ENCODE measurements at regions of chr22 and their contacts with region 1.

Region 1: DNA sequence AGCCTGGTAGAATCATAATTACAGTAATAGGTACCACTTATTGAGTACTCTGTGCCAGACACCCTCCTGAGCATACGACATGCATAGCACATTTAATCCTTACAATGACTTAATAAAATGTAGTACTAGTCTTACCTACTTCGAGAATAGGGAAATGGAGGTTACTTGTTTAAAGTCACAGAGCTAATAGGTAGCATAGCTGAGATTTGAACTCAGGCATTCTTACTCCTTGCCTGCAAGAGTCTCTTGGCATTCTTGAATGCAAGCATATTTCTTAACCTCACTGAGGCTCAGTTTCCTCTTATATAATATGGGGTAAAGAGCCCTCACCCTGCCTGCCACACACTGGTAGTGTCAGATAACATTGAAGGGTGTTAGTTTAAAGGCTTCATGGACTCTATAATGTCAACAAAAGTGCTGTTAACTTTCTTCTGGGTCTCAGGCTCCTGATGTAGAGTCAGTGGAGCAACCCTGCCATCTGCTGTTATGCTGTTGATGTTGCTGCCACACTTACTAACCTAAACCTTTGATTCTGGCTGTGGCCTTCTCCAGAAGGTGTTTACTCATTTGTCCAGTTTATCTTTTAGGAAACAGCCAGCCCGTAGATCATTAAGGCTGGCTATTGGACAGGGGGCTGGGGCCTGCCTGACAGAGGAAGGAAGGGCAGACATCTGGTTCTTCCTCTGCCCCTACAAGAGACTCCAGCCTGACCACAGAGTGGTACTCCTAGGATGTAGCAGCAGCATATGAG is 18.9 kb downstream of the LIMK2 start:
- DNase-seq: peak in 2 of 5 donors; percentile 46
- ATAC-seq: peak; percentile 73 to 77 (median 76)
- H3K4me3 ChIP-seq: no peak overlapping the region
- H3K27ac ChIP-seq: peak overlapping the region in 11 of 12 donors; percentile 61 to 95 (median 70)
- H3K4me1 ChIP-seq: peaks cover 5 to 80% (median 35%) of the 10 kb centered on the region in 12 donors
- H3K27me3 ChIP-seq: no peaks in the 10 kb centered on the region
- CTCF ChIP-seq: peak; percentile 53 to 82 (median 68)
- POLR2A ChIP-seq: no peak

Region 2: DNA sequence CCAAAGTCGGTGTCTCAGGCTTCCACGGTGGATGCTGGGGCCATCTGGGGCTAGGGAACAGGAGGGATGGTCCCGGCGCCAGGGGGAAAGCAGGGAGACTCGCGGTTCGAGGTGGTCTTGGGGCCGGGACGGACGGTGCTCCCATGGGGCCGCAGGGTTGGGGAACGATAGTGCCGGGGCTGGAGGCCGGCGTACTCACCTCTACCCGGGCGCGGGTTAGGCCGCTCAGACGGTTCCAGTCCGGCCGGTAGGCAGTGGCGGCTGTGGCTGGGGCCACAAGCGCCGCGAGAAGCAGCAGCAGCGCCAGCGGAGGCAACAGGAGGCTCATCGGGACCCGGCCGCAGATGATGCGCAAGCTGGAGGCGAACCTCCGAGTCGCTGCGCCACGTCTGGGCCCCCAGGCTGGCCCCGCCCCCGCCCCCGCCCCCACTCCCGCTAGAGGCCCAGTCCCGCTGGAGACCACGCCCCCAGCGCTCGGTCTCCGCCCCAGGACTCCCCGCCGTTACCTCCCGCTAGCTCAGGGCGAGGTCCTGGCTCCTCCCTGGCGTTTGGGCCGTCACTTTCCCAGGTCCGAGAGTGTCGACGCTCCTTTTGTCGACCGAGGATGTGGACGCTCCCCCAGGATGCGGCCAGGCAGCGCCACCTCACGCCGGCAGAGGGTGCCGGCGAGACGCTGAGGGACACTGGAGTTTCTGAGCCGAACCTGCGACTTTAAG is 123.7 kb before region 1 on chr22 and contains the start of gene SELENOM:
- intact Hi-C with region 1: loop called in 9 of 10 experiments (anchors 2 to 10 kb)
- DNase-seq: peak; percentile 97 to 98 (median 97)
- ATAC-seq: peak; percentile 92 to 95 (median 94)
- H3K4me3 ChIP-seq: peak within 1 kb of the TSS; percentile 56 to 95 (median 74)
- H3K27ac ChIP-seq: peak within 1 kb of the TSS; percentile 88 to 99 (median 93)
- H3K4me1 ChIP-seq: peaks cover 0 to 45% (median 20%) of the 10 kb centered on the region in 12 donors
- H3K27me3 ChIP-seq: no peaks in the 10 kb centered on the region
- CTCF ChIP-seq: peak; percentile 88 to 99 (median 96)
- POLR2A ChIP-seq: peak in 1 of 2 donors; percentile 83
- total RNA-seq, gene SELENOM: 35.0 to 183 (median 52.9) TPM

Region 3: GRCh38 chr22:31119026-31119717 is 111.9 kb before region 1 on chr22:
- intact Hi-C with region 1: loop called in 2 of 10 experiments (anchors 10 kb)
- DNase-seq: peak in 4 of 5 donors; percentile 66 to 82 (median 74)
- ATAC-seq: peak; percentile 83 to 91 (median 90)
- H3K4me3 ChIP-seq: no peak overlapping the region
- H3K27ac ChIP-seq: peak overlapping the region; percentile 58 to 94 (median 88)
- H3K4me1 ChIP-seq: peaks cover 0 to 51% (median 21%) of the 10 kb centered on the region in 12 donors
- H3K27me3 ChIP-seq: no peaks in the 10 kb centered on the region
- CTCF ChIP-seq: no peak
- POLR2A ChIP-seq: peak in 1 of 2 donors; percentile 66

Region 4: GRCh38 chr22:31160328-31160978 is 70.6 kb before region 1 on chr22:
- intact Hi-C with region 1: loop called in 1 of 10 experiments (anchors 5 kb)
- DNase-seq: peak in 1 of 5 donors; percentile 33
- ATAC-seq: peak; percentile 29 to 63 (median 54)
- H3K4me3 ChIP-seq: peak overlapping the region; percentile 75 to 95 (median 88)
- H3K27ac ChIP-seq: peak overlapping the region; percentile 75 to 96 (median 90)
- H3K4me1 ChIP-seq: peaks cover 0 to 39% (median 29%) of the 10 kb centered on the region in 12 donors
- H3K27me3 ChIP-seq: no peaks in the 10 kb centered on the region
- CTCF ChIP-seq: no peak
- POLR2A ChIP-seq: no peak

Region 5: DNA sequence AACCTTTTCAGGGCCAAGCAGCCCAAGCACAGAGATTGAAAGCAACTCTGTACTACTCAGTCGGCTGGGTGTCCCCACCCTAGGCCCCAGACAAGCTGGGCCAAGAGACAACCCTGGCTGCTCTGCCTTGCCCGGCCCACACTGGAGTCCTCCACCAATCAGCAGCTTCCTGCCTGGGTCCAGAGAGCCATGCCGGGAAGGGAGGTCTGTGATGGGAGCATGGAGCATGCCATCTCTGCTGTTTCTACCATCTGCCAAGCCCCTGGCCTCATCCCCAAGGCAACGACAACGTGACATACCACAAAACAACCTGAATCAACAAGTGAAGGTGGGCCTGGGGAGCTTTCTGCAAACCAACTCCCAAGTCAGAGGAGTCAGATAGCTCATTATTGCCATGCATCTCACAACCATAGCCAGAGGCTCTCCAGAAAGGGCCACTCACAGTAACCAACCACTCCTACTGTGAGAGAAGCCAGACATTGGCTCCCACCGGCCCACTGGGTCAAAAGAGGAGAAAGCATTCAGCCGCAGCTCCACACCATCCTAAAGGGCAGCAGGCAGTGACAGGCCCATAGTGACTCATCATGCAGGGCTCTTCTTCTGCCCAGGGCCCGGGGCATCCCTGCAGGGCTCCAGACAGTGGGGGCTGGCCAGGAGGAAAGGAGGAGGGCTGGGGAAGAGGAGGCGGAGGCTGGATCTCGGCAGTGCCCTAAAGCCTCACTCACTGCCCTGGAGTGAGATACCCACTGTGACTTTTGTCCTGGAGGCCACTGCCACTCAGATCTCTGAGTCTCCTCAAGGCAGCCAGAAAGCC is 97.0 kb after region 1 on chr22:
- intact Hi-C with region 1: no loop called
- DNase-seq: no peak
- ATAC-seq: peak in 2 of 4 donors; percentile 37 to 51
- H3K4me3 ChIP-seq: no peak overlapping the region
- H3K27ac ChIP-seq: no peak overlapping the region
- H3K4me1 ChIP-seq: no peaks in the 10 kb centered on the region
- H3K27me3 ChIP-seq: no peaks in the 10 kb centered on the region
- CTCF ChIP-seq: no peak
- POLR2A ChIP-seq: no peak